ENCODE measurements at regions of chr6 and their contacts with region 1.

Region 1: DNA sequence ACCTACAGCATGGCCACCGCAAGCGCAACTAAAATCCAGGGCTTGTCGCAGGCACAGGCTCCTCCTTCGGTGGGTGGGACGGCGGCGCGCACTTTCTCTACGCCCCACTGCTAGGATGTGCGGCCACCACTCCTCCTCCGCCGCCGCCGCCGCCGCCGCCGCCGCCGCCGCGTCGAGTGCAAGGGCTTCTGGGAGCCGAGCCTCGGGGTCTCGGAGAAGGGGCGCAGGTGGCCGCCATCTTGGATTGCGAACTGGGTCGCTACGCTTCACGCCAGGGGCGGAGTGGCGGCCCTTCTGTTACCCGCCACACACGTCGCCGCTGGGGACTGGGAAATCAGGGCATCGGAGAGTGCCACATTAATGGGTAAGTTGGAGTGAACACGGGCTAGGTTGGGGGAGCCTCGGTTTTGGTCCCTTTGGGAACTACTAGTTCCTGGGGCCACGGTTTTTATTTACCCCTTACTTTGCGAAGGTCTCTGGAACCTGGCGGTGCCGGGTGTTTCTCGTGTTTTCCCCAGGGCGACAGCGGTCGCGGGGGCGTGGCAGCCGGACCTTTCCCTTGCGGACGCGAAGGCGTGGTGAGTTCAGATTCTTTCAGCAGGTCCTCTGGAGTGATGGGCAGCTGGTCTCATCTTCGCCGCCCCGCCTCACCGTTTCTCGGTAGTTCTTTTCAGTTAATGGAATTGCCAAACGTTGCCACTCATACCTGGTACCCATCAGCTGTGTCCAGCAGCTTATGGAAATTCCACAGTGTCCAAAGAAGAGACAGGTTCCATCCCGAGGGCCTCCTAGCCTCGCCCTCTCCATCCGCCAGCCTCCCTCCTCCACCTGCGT is at the start of gene KPNA5:
- DNase-seq: peak; percentile 83 to 93 (median 88)
- H3K4me3 ChIP-seq: peak within 1 kb of the TSS; percentile 75 to 95
- H3K4me3 Mint-ChIP-seq: peak within 1 kb of the TSS; percentile 96 to 99 (median 98)
- H3K27ac ChIP-seq: peak within 1 kb of the TSS; percentile 84
- H3K27ac Mint-ChIP-seq: peak within 1 kb of the TSS; percentile 95 to 99 (median 99)
- H3K4me1 ChIP-seq: peaks cover 34% of the 10 kb centered on the region
- H3K4me1 Mint-ChIP-seq: peaks cover 33 to 61% (median 46%) of the 10 kb centered on the region in 4 donors
- H3K27me3 ChIP-seq: no peaks in the 10 kb centered on the region
- H3K27me3 Mint-ChIP-seq: no peaks in the 10 kb centered on the region
- total RNA-seq, gene KPNA5: 60.7 to 61.8 TPM

Region 2: DNA sequence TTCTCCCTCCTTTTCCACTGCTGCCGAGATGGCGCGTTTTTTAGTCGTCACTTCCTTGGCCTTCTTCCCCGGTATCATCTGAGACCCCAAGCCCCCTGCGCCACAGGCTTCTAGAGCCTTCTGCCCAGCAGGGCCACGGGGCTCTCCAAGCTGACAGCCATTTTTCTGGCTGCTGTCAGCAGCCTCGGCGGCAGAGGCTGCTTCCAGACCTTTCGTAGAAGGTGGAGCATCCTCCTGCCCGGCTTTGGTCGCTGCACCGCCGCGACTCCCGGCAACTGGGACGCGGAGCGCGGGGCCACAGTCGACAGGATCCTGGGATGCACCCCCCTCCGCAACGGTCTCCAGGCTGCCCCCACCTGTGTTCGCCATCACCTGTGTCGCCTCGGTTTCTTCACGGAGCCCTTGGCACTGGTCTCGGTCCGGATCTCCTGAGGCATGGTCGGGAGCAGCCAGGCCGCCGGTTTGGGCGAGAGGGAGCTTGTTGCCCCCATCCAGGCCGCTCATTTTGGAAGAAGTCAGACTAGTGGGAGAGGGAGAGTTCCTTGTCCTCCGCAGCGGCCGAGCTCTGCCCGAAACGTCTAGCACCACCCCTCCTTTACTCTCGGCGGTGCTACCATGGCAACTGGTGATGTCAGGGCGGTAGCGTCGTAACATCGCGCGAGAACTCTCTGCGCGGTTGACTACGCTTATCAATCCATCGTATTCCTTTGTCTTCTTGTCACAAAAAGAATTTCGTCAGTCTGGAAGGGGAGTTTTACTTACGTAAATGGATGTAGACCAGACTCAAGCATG is 427.5 kb before region 1 on chr6 and contains the start of gene TSPYL4:
- CTCF ChIA-PET with region 1: no interaction called
- POLR2A ChIA-PET with region 1: interaction called, 3 read pairs
- intact Hi-C with region 1: loop called (anchors 2 kb)
- DNase-seq: peak; percentile 91 to 96 (median 93)
- H3K4me3 ChIP-seq: peak within 1 kb of the TSS; percentile 66 to 96
- H3K4me3 Mint-ChIP-seq: no peak within 1 kb of the TSS
- H3K27ac ChIP-seq: peak within 1 kb of the TSS; percentile 97
- H3K27ac Mint-ChIP-seq: peak within 1 kb of the TSS in 1 of 7 donors; percentile 69
- H3K4me1 ChIP-seq: peaks cover 45% of the 10 kb centered on the region
- H3K4me1 Mint-ChIP-seq: peaks cover 3 to 32% (median 18%) of the 10 kb centered on the region in 4 donors
- H3K27me3 ChIP-seq: no peaks in the 10 kb centered on the region
- H3K27me3 Mint-ChIP-seq: no peaks in the 10 kb centered on the region
- total RNA-seq, gene TSPYL4: 22.3 to 23.0 TPM

Region 3: DNA sequence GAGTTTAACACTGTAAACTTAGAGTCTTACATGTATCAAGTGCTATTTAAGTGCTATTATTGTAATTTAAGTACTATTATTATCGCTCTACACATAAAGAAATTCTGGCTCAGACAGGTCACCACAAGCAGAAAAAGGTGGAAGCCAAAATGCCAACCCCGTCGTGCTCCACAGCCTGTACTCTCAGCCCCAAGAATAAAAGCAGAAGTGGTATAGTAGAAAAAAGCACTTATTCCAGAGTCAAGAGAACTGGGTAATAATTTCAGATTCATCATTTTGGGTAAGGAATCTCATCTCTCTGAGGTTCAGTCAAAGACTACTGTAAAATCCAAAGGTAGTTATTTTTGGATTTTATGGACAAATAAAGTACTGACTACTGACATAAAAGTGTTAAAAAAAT is 13.6 kb before region 1 on chr6:
- CTCF ChIA-PET with region 1: interaction called, 15 read pairs
- POLR2A ChIA-PET with region 1: interaction called, 43 read pairs
- intact Hi-C with region 1: loop called (anchors 1 kb)
- DNase-seq: no peak
- H3K4me3 ChIP-seq: peak overlapping the region; percentile 91 to 98
- H3K4me3 Mint-ChIP-seq: peak overlapping the region; percentile 96 to 100 (median 99)
- H3K27ac ChIP-seq: peak overlapping the region; percentile 91
- H3K27ac Mint-ChIP-seq: peak overlapping the region; percentile 97 to 100 (median 99)
- H3K4me1 ChIP-seq: peaks cover 50% of the 10 kb centered on the region
- H3K4me1 Mint-ChIP-seq: peaks cover 31 to 54% (median 41%) of the 10 kb centered on the region in 4 donors
- H3K27me3 ChIP-seq: no peaks in the 10 kb centered on the region
- H3K27me3 Mint-ChIP-seq: peaks cover 2% of the 10 kb centered on the region in 2 donors

Region 4: GRCh38 chr6:116695401-116695800 is 14.2 kb after region 1 on chr6:
- CTCF ChIA-PET with region 1: interaction called, 3 read pairs
- POLR2A ChIA-PET with region 1: no interaction called
- intact Hi-C with region 1: loop called (anchors 2 kb)
- DNase-seq: peak in 4 of 5 donors; percentile 4 to 24 (median 11)
- H3K4me3 ChIP-seq: no peak overlapping the region
- H3K4me3 Mint-ChIP-seq: peak overlapping the region in 4 of 8 donors; percentile 28 to 55 (median 37)
- H3K27ac ChIP-seq: no peak overlapping the region
- H3K27ac Mint-ChIP-seq: peak overlapping the region in 2 of 7 donors; percentile 22 to 29
- H3K4me1 ChIP-seq: peaks cover 16% of the 10 kb centered on the region
- H3K4me1 Mint-ChIP-seq: peaks cover 27 to 44% (median 36%) of the 10 kb centered on the region in 4 donors
- H3K27me3 ChIP-seq: no peaks in the 10 kb centered on the region
- H3K27me3 Mint-ChIP-seq: no peaks in the 10 kb centered on the region

Region 5: GRCh38 chr6:116714761-116715160 is 33.6 kb after region 1 on chr6:
- CTCF ChIA-PET with region 1: no interaction called
- POLR2A ChIA-PET with region 1: no interaction called
- intact Hi-C with region 1: no loop called
- DNase-seq: no peak
- H3K4me3 ChIP-seq: no peak overlapping the region
- H3K4me3 Mint-ChIP-seq: no peak overlapping the region
- H3K27ac ChIP-seq: no peak overlapping the region
- H3K27ac Mint-ChIP-seq: peak overlapping the region in 2 of 7 donors; percentile 8 to 41
- H3K4me1 ChIP-seq: no peaks in the 10 kb centered on the region
- H3K4me1 Mint-ChIP-seq: peaks cover 5 to 29% (median 10%) of the 10 kb centered on the region in 4 donors
- H3K27me3 ChIP-seq: no peaks in the 10 kb centered on the region
- H3K27me3 Mint-ChIP-seq: no peaks in the 10 kb centered on the region